ENCODE measurements at regions of chr12 and their contacts with region 1.

Region 1: GRCh38 chr12:53984901-53985709 is at the start of gene HOXC10:
- DNase-seq: peak; percentile 71
- H3K4me3 Mint-ChIP-seq: peak within 1 kb of the TSS; percentile 54
- H3K27ac Mint-ChIP-seq: peak within 1 kb of the TSS; percentile 73
- H3K4me1 Mint-ChIP-seq: peaks cover 31% of the 10 kb centered on the region
- H3K27me3 Mint-ChIP-seq: peaks cover 96% of the 10 kb centered on the region
- total RNA-seq, gene HOXC10: not detected

Region 2: GRCh38 chr12:53952871-53953734 is 32.0 kb before region 1 on chr12:
- CTCF ChIA-PET with region 1: interaction called, 20 read pairs
- POLR2A ChIA-PET with region 1: no interaction called
- DNase-seq: no peak
- H3K4me3 Mint-ChIP-seq: peak overlapping the region; percentile 53
- H3K27ac Mint-ChIP-seq: peak overlapping the region; percentile 33
- H3K4me1 Mint-ChIP-seq: peaks cover 7% of the 10 kb centered on the region
- H3K27me3 Mint-ChIP-seq: peaks cover 95% of the 10 kb centered on the region

Region 3: DNA sequence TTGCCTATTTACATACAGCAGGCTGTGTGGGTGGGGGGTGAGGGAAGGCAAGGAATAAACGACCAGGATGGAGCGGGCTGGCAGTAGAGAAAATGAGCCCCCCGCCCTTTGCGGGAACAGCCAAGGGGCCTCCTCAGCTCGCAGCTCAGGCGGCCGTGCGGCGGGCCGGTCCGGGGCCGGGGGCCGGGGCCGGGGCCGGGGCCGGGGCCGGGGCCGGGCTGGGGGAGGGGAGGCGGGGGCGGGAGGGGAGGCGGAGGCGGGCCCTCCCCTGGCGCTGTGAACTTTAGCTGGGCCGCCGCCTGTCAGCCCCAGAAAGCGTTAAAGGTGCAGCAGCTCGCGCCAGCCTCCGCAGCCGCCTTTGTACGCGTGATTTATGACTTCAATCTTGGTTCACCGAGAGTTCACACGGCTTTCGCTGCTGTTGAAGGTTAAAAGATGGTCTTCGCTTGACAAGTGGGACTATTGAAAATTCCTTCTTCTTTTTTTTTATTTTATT is 97.3 kb after region 1 on chr12:
- CTCF ChIA-PET with region 1: no interaction called
- POLR2A ChIA-PET with region 1: no interaction called
- DNase-seq: peak; percentile 50
- H3K4me3 Mint-ChIP-seq: peak overlapping the region; percentile 74
- H3K27ac Mint-ChIP-seq: peak overlapping the region; percentile 91
- H3K4me1 Mint-ChIP-seq: peaks cover 34% of the 10 kb centered on the region
- H3K27me3 Mint-ChIP-seq: peaks cover 14% of the 10 kb centered on the region

Region 4: DNA sequence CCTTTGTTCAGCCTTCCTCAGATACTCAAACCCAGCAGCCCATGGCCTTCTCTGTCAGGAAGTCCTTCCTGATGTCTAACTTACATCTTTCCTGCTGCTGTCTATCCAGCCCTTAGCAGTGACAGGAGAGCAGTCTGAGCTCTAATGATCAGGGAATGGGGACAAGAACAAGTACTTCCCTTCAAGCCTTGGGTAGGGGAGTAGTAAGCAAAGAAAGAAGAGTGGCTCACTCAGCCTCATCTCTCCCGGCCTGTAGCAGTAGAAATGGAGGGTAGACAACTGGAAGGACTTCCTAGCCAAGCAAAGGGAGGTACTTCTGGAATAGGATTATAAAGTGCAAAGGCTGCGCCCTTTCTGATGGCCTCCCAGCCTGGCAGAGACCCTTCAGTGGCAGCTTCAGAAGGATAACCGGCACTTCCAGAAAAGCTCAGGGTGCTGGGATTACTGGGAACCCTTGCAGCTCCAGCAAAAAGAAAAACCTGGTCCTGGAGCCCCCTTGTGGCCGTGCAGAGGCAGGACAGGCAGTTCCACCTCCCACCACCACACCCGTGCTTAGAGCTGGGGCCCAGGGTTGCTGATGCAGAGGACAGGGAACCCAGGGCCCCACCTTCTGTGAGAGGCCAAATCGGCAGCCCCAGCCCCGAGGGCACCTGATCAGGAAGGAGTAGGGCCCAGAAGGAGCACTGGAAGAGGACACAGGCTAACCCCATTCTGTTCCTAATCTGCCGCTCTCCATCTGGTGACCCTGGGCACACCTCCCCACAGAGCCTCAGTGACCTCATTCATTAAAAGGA is 216.1 kb after region 1 on chr12:
- CTCF ChIA-PET with region 1: interaction called, 19 read pairs
- POLR2A ChIA-PET with region 1: no interaction called
- DNase-seq: peak; percentile 68
- H3K4me3 Mint-ChIP-seq: no peak overlapping the region
- H3K27ac Mint-ChIP-seq: no peak overlapping the region
- H3K4me1 Mint-ChIP-seq: peaks cover 1% of the 10 kb centered on the region
- H3K27me3 Mint-ChIP-seq: peaks cover 54% of the 10 kb centered on the region

Region 5: DNA sequence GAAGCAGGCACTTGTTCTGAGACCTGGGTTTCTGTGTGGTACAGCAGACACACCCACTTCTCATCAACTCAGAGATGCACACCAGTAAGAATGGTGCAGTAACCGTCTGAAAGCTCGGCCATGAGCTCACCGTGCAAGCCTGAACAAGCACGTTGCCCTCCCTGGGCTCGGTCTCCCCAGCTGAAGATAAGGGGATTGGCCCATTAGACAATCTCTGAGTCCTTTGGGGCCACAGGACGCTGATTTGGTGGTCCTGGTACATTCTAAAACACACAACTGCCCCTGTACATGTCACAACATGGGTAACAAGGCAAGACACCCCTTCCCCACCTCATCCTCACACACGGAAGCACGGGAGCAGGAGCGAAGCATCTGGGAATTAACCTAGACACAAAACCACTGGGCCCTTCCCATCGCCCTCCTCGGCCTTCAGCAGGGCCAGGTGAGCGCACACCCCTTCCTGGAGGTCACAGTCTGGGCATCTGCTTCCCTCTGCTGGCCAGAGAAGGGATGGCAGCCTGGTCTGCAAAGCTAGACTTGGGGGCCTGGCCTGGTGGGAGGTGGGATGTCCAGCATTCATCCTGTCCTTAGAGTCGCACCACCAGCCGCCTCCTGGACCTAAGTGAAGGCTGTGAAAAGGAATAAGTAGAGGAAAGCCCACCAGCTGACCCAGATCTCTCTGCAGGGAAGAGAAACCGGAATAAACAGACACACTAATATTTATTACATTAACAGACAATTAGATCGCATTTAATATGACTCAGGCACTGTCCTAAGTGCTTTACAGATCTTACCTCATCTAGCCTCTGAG is 222.6 kb after region 1 on chr12:
- CTCF ChIA-PET with region 1: interaction called, 12 read pairs
- POLR2A ChIA-PET with region 1: no interaction called
- DNase-seq: peak; percentile 81
- H3K4me3 Mint-ChIP-seq: no peak overlapping the region
- H3K27ac Mint-ChIP-seq: peak overlapping the region; percentile 36
- H3K4me1 Mint-ChIP-seq: peaks cover 8% of the 10 kb centered on the region
- H3K27me3 Mint-ChIP-seq: peaks cover 39% of the 10 kb centered on the region